B cell (primary cell): ENCODE measurements at regions of chr15 and their contacts with region 1.

Region 1: GRCh38 chr15:80455668-80456442 is 51.7 kb downstream of the ARNT2 start:
- DNase-seq: peak; percentile 69
- ATAC-seq: peak; percentile 49
- H3K4me3 ChIP-seq: no peak overlapping the region
- H3K4me3 Mint-ChIP-seq: no peak overlapping the region
- H3K27ac ChIP-seq: no peak overlapping the region
- H3K27ac Mint-ChIP-seq: no peak overlapping the region
- H3K4me1 ChIP-seq: peaks cover 0 to 4% of the 10 kb centered on the region in 2 donors
- H3K4me1 Mint-ChIP-seq: peaks cover 4% of the 10 kb centered on the region
- H3K27me3 ChIP-seq: peaks cover 0 to 8% (median 4%) of the 10 kb centered on the region in 4 experiments
- H3K27me3 Mint-ChIP-seq: peaks cover 11% of the 10 kb centered on the region
- CTCF ChIP-seq: peak; percentile 98

Region 2: DNA sequence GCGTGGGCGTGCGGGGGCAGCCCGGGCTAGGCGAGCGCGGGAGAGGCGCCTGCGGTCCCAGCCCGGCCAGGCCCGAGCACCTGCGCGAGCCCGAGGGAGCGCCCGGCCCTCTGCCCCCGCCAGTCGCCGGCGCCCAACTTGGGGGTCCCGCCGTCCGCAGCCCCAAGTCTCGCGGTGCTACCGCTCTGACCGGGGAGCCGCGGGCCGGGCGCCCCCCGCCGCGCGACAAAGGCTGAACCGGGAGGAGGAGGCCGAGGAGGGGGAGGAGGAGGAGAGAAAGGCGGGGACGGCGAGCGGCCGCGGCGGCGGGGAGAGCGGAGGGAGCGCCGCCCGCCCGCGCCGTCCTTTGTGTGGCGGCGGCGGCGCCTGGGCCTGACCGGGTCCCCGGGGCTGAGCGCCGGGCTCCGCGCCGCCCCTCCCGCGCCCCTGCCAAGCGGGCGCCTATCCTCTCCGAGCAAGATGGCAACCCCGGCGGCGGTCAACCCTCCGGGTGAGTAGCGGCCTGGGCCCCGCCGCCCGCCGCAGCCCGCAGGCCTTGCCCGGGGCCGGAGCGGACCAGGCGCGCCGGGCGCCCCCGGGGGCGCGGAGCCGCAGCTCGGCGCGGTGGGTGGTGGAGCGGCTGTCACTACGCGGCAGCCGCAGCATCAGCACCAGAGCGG is 51.7 kb before region 1 on chr15 and contains the start of gene ARNT2:
- CTCF ChIA-PET with region 1: no interaction called
- POLR2A ChIA-PET with region 1: no interaction called
- intact Hi-C with region 1: no loop called
- DNase-seq: no peak
- ATAC-seq: no peak
- H3K4me3 ChIP-seq: no peak within 1 kb of the TSS
- H3K4me3 Mint-ChIP-seq: peak within 1 kb of the TSS; percentile 65
- H3K27ac ChIP-seq: no peak within 1 kb of the TSS
- H3K27ac Mint-ChIP-seq: no peak within 1 kb of the TSS
- H3K4me1 ChIP-seq: no peaks in the 10 kb centered on the region
- H3K4me1 Mint-ChIP-seq: peaks cover 8% of the 10 kb centered on the region
- H3K27me3 ChIP-seq: peaks cover 0 to 50% (median 27%) of the 10 kb centered on the region in 4 experiments
- H3K27me3 Mint-ChIP-seq: peaks cover 72% of the 10 kb centered on the region
- CTCF ChIP-seq: no peak
- total RNA-seq, gene ARNT2: not detected in 2 replicates

Region 3: DNA sequence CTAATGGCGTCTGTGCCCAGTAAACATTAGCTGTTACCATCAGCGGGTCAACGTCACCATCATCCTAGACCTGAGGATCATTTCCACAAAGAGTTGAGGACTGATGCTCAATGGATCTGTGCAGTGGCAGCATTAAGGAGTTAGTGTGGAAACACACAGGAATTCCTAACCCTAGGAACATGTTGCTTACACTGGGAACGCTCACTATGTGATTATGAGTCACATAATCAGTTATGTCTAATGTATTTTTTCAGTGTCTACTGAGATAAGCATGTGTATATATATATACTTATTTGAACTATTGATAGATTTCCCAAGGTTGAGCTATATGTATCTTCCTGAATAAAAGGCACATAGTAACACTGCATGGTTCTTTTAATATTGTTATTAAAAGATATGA is 32.6 kb before region 1 on chr15:
- CTCF ChIA-PET with region 1: no interaction called
- POLR2A ChIA-PET with region 1: no interaction called
- intact Hi-C with region 1: no loop called
- DNase-seq: no peak
- ATAC-seq: no peak
- H3K4me3 ChIP-seq: no peak overlapping the region
- H3K4me3 Mint-ChIP-seq: no peak overlapping the region
- H3K27ac ChIP-seq: no peak overlapping the region
- H3K27ac Mint-ChIP-seq: no peak overlapping the region
- H3K4me1 ChIP-seq: no peaks in the 10 kb centered on the region
- H3K4me1 Mint-ChIP-seq: no peaks in the 10 kb centered on the region
- H3K27me3 ChIP-seq: peaks cover 0 to 4% (median 0%) of the 10 kb centered on the region in 4 experiments
- H3K27me3 Mint-ChIP-seq: peaks cover 17% of the 10 kb centered on the region
- CTCF ChIP-seq: no peak

Region 4: DNA sequence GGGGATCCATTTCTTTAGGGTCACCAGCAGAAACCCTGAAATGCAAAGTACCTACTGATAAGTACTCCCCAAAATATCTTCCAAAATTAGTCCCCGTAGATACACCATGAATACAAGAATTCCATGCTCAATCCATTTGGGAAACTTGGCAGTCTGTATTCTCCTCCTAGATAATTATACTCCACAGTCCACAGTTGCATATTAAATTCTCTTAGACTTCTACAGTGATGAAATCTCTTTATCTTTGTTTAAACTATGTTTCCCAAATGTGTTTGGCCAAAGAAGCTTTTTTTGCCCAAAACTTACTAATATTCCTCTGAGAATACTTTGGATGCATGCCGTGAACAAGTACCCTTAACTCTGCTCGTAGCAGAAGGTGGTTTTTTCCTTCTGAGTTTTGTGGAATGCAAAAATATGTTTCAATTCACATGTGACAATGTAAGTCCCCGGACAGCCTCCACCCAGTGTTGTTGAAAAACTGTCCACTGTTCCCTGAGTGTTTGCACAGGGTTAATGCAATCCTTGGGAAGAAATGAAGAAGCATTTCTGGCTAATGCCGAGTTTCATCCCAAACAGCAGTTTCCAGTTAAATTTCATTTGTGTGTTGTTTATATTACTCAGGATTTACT is 75.0 kb after region 1 on chr15:
- CTCF ChIA-PET with region 1: no interaction called
- POLR2A ChIA-PET with region 1: no interaction called
- intact Hi-C with region 1: no loop called
- DNase-seq: no peak
- ATAC-seq: no peak
- H3K4me3 ChIP-seq: no peak overlapping the region
- H3K4me3 Mint-ChIP-seq: no peak overlapping the region
- H3K27ac ChIP-seq: no peak overlapping the region
- H3K27ac Mint-ChIP-seq: no peak overlapping the region
- H3K4me1 ChIP-seq: no peaks in the 10 kb centered on the region
- H3K4me1 Mint-ChIP-seq: no peaks in the 10 kb centered on the region
- H3K27me3 ChIP-seq: peaks cover 0 to 3% (median 0%) of the 10 kb centered on the region in 4 experiments
- H3K27me3 Mint-ChIP-seq: peaks cover 31% of the 10 kb centered on the region
- CTCF ChIP-seq: no peak

Region 5: DNA sequence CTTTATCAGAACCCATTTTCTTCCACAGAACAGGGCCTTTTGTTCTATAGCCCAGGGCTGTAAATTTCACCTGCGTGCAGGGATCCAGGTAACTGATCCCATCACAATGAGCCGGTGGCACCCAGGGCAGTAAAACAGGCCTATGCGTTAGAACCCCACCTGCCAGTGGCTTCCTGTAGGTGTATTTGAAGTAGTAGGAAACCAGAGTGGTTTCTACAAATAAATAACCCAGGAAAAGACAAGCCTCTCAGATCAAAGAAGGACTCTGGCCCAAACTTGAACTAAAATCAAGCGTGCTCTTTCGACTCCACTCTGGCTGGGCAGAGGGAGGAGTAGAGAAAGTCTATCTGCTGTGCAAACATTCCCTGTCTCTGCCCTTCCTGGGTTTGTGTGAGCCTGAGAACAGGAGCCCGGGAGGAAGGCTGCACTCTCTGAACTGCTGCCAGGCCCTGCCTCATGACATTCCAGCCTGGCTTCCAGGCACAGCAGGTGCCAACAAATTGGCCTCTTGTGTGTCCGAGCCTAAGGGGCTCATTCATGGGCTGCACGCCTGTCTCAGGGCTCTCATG is 401.0 kb after region 1 on chr15:
- CTCF ChIA-PET with region 1: interaction called, 3 read pairs
- POLR2A ChIA-PET with region 1: no interaction called
- intact Hi-C with region 1: loop called (anchors 5 kb)
- DNase-seq: no peak
- ATAC-seq: no peak
- H3K4me3 ChIP-seq: no peak overlapping the region
- H3K4me3 Mint-ChIP-seq: no peak overlapping the region
- H3K27ac ChIP-seq: no peak overlapping the region
- H3K27ac Mint-ChIP-seq: no peak overlapping the region
- H3K4me1 ChIP-seq: no peaks in the 10 kb centered on the region
- H3K4me1 Mint-ChIP-seq: no peaks in the 10 kb centered on the region
- H3K27me3 ChIP-seq: peaks cover 0 to 2% (median 0%) of the 10 kb centered on the region in 4 experiments
- H3K27me3 Mint-ChIP-seq: peaks cover 8% of the 10 kb centered on the region
- CTCF ChIP-seq: no peak

Region 6: DNA sequence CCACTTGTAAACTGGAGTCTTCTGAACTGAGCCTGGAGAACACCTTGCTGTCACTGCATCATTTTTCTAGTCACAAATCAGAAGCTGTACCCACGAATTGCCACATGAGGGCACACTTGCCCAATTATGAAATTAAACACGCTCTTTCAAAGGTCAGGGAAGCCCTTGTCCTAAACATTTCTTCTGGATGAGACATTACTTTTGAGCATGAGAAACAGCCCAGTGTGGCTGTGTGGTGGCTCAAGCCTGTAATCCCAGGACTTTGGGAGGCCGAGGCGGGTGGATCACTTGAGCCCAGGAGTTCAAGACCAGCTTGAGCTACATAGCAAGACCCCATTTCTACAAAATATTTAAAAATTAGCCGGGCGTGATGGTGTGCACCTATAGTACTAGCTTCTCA is 650.7 kb after region 1 on chr15:
- CTCF ChIA-PET with region 1: interaction called, 5 read pairs
- POLR2A ChIA-PET with region 1: no interaction called
- intact Hi-C with region 1: loop called (anchors 10 kb)
- DNase-seq: peak; percentile 59
- ATAC-seq: peak; percentile 53
- H3K4me3 ChIP-seq: no peak overlapping the region
- H3K4me3 Mint-ChIP-seq: no peak overlapping the region
- H3K27ac ChIP-seq: no peak overlapping the region
- H3K27ac Mint-ChIP-seq: no peak overlapping the region
- H3K4me1 ChIP-seq: no peaks in the 10 kb centered on the region
- H3K4me1 Mint-ChIP-seq: peaks cover 6% of the 10 kb centered on the region
- H3K27me3 ChIP-seq: peaks cover 0 to 12% (median 4%) of the 10 kb centered on the region in 4 experiments
- H3K27me3 Mint-ChIP-seq: peaks cover 42% of the 10 kb centered on the region
- CTCF ChIP-seq: peak; percentile 79